H1 (cell line): ENCODE measurements at regions of chr1 and their contacts with region 1.

Region 1: GRCh38 chr1:26949926-26950319 is 10.3 kb downstream of the KDF1 start:
- DNase-seq: no peak
- H3K4me3 ChIP-seq: no peak overlapping the region
- H3K27ac ChIP-seq: no peak overlapping the region
- H3K4me1 ChIP-seq: no peaks in the 10 kb centered on the region
- H3K27me3 ChIP-seq: no peaks in the 10 kb centered on the region
- CTCF ChIP-seq: no peak
- EP300 ChIP-seq: no peak
- POLR2A ChIP-seq: no peak
- RAD21 ChIP-seq: no peak

Region 2: DNA sequence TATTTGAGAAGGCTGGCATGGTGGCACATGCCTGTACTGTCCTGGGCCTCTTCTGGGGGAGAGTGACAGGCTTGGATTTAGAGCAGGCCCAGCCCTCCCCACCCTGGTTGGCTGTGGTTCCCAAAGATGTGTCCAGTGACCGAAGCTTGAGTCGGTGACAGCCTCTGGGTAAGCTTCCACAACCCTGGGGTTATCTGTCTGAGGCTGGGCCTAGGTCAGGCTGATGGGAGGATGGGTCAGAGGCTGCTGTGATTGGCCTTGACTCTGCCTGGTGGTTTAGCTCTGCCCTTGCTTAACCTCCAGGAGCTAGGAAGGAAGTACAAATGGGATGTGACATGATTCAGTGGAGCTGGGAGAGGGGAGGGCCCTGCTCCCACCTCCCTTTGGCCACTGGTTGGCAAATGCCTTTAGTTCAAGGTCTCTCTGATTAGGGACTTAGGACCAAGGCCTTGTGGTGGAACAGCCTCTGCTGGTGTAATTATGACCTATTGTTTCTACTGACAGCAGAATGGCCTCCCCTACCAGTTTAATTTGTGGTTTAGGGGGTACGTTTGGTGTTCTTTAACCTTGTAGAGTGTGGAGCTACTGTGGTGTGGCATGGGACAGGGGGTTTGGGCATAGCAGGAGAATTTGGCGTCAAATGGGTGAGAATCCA is 11.8 kb before region 1 on chr1:
- CTCF ChIA-PET with region 1: interaction called, 4 read pairs
- POLR2A ChIA-PET with region 1: interaction called, 26 read pairs
- DNase-seq: no peak
- H3K4me3 ChIP-seq: no peak overlapping the region
- H3K27ac ChIP-seq: no peak overlapping the region; the same call in 1 of the 2 replicates
- H3K4me1 ChIP-seq: peaks cover 0 to 3% (median 0%) of the 10 kb centered on the region in 4 experiments; a peak in 1 of 7 replicates
- H3K27me3 ChIP-seq: no peaks in the 10 kb centered on the region
- CTCF ChIP-seq: no peak
- EP300 ChIP-seq: no peak
- POLR2A ChIP-seq: no peak
- RAD21 ChIP-seq: no peak

Region 3: DNA sequence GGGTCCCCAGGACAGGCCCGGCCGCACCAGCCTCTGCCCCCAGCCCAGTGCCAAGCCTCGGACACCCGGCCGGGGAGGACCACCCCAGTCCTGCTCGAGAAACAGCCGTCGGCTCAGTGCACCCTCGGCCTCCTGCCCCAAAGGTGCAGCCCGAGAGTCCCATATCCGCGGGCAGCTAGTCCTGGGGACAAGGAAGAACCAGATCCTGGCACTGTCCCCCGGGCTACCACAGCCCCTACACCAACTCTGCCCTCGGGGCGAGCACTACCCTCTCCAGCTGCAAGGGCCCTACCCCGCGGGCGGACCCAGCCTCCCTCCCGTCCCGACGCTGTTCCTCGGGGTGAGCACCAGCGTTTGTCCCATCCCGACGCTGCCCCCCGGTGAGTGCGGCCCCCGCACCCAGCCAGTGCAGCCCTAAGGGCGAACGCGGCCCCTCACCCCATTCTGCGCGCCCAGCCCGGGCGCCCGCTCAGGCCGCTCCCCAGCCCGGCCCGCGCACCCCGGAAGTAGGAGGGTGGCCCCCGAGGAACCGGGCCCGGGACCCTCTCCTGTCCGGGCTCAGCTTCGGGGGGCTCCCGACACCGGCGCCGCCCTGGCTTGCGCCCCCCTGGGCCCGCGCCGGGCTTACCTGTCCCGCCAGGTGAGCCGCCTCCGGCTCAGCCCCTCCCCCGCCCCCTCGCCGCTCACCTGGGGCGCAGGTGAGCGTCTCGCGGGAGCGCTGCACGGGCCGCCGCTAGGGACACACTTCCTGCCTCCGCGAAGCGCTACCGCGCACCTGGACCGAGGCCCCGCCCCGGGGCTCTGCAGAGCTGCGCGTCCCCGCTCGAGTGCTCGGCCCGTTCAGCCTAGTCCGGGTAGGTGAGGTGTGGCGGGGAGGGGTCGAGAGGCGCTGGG is 10.0 kb after region 1 on chr1 and contains the start of gene KDF1:
- CTCF ChIA-PET with region 1: interaction called, 3 read pairs
- POLR2A ChIA-PET with region 1: interaction called, 23 read pairs
- DNase-seq: peak; percentile 77 to 95
- H3K4me3 ChIP-seq: peak within 1 kb of the TSS; percentile 84 to 97 (median 86)
- H3K27ac ChIP-seq: peak within 1 kb of the TSS; percentile 76; the same call in 1 of the 2 replicates
- H3K4me1 ChIP-seq: peaks cover 0 to 3% (median 0%) of the 10 kb centered on the region in 4 experiments; a peak in 3 of 7 replicates
- H3K27me3 ChIP-seq: no peaks in the 10 kb centered on the region
- CTCF ChIP-seq: peak; percentile 15 to 34 (median 26); a peak in 2 of 4 replicates
- EP300 ChIP-seq: peak; percentile 4 to 86; a peak in 2 of 3 replicates
- POLR2A ChIP-seq: peak in 1 of 2 experiments; percentile 62; a peak in 1 of 3 replicates
- RAD21 ChIP-seq: no peak; a peak in 1 of 4 replicates
- total RNA-seq, gene KDF1: 16.7 and 16.9 TPM in 2 replicates